A549 (cell line): ENCODE measurements at regions of chr1 and their contacts with region 1.

Region 1: GRCh38 chr1:205528887-205529825 is 24.7 kb downstream of the CDK18 start:
- DNase-seq: peak; percentile 66 to 88
- ATAC-seq: peak; percentile 78 to 93
- H3K4me3 ChIP-seq: peak overlapping the region; percentile 42
- H3K27ac ChIP-seq: peak overlapping the region; percentile 42 to 77; a peak in 4 of 6 replicates
- H3K4me1 ChIP-seq: 0 out of 3 replicates have a peak, but pooled peaks cover 3% of the 10 kb centered on the region
- CTCF ChIP-seq: peak; percentile 90
- EP300 ChIP-seq: no peak
- POLR2A ChIP-seq: no peak
- RAD21 ChIP-seq: peak; percentile 82 to 85

Region 2: DNA sequence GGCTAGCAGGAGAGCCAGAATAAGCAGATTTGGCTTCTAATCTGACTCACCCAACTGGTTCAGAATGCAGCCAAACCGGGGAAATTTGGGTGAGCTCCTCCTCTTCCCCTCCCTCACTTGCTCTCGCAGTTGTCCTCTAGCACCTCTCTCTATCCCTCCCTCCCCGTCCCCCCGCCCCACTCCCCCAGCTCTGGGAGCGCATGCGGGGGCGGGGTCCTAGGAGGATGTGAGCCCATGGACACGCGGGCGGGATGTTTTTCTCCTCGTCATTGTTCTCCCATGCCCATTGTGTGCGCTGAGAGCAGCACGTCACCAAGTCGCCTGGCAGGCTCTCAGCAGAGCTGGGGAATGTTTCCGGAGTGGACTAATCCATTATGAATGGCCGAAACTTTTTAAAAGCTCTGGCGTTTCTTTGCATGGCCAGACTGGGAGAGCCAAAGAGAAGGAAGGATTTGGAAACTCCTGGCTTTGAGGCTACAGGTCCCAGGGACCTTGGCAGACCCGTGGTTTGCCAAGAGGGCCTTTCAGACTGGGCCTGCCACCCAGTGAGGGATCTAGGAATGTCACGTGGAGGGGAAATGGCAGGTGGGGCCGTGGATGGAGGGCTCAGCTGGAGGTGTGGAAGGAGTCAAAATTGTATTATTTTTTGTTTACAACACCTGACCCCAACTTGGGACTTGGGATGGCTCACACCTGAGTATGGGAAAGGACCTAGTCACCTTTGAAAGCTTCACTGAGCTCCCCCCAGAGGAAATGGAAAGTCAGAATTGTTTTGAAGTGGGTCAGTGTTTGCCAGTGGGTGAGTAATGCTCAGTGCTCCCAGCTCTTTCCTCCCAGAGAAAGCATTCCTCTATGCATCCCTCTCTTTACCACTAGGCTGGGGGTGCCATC is 14.5 kb after region 1 on chr1:
- CTCF ChIA-PET with region 1: interaction called, 52 read pairs
- POLR2A ChIA-PET with region 1: no interaction called
- DNase-seq: peak in 1 of 2 experiments; percentile 63
- ATAC-seq: peak; percentile 62 to 78
- H3K4me3 ChIP-seq: peak overlapping the region; percentile 29; the same call in 1 of the 3 replicates
- H3K27ac ChIP-seq: peak overlapping the region; percentile 12 to 65; a peak in 3 of 6 replicates
- H3K4me1 ChIP-seq: peaks cover 9% of the 10 kb centered on the region; the same call in 2 of the 3 replicates
- CTCF ChIP-seq: no peak
- EP300 ChIP-seq: no peak
- POLR2A ChIP-seq: no peak
- RAD21 ChIP-seq: no peak

Region 3: GRCh38 chr1:205576808-205577761 is 47.9 kb after region 1 on chr1:
- CTCF ChIA-PET with region 1: interaction called, 17 read pairs
- POLR2A ChIA-PET with region 1: no interaction called
- DNase-seq: peak; percentile 15 to 19
- ATAC-seq: peak; percentile 62 to 64; a peak in 5 of 6 replicates
- H3K4me3 ChIP-seq: no peak overlapping the region
- H3K27ac ChIP-seq: no peak overlapping the region
- H3K4me1 ChIP-seq: no peaks in the 10 kb centered on the region
- CTCF ChIP-seq: no peak
- EP300 ChIP-seq: no peak
- POLR2A ChIP-seq: no peak
- RAD21 ChIP-seq: no peak

Region 4: GRCh38 chr1:205631727-205632373 is 102.7 kb after region 1 on chr1 and contains the start of gene ELK4:
- CTCF ChIA-PET with region 1: interaction called, 34 read pairs
- POLR2A ChIA-PET with region 1: interaction called, 4 read pairs
- DNase-seq: peak; percentile 94 to 98
- ATAC-seq: peak; percentile 91 to 94
- H3K4me3 ChIP-seq: peak within 1 kb of the TSS; percentile 91
- H3K27ac ChIP-seq: peak within 1 kb of the TSS; percentile 99
- H3K4me1 ChIP-seq: peaks cover 15% of the 10 kb centered on the region; the same call in 2 of the 3 replicates
- CTCF ChIP-seq: peak; percentile 57
- EP300 ChIP-seq: no peak
- POLR2A ChIP-seq: peak; percentile 94
- RAD21 ChIP-seq: peak; percentile 76 to 79
- polyA plus RNA-seq, gene ELK4: 11.9 and 12.7 TPM in 2 replicates

Region 5: DNA sequence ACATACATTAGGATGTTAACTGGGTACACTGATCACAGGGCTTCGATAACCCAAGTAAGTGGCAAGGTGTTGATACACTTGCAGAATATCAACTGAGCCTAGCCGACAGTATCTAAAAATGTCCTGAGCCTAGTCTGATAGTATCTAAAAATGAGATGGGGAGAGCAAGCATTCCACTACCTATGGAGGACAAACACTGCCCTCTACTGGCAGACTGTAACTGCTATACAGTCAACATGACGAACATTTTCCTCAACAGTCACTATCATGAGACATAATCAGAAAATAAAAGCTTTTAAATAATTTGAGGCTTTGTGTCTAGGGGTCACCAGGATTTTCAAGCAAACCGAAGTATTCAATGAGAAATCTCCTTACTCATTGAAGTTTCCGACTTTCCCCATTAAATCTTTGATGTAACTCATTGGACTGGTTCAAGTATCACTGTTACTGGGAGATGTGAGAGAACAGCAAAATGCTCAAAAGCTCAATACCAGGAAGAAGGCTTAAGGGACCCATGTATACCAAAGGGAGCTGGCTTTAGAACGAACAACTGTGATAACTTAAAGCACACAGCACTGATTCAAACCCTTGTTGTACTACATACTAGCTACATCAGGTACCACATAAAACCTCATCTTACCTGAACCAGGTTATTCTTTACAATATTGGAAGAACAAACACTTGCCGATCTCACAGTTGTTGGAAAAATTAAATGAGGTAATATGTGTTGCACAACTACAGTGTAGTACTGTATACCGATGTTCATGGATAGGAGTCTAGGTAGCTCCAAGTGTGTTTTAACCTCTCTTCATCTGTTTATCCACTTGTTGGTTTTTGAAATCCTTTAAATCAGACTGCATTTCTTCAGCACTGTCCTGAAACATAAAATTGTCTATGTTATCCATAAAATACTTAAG is 182.2 kb after region 1 on chr1:
- CTCF ChIA-PET with region 1: interaction called, 71 read pairs
- POLR2A ChIA-PET with region 1: no interaction called
- DNase-seq: peak; percentile 59 to 80
- ATAC-seq: peak; percentile 89 to 92
- H3K4me3 ChIP-seq: no peak overlapping the region
- H3K27ac ChIP-seq: no peak overlapping the region
- H3K4me1 ChIP-seq: peaks cover 10% of the 10 kb centered on the region; the same call in 2 of the 3 replicates
- CTCF ChIP-seq: peak; percentile 91
- EP300 ChIP-seq: no peak
- POLR2A ChIP-seq: no peak
- RAD21 ChIP-seq: peak; percentile 66 to 78